PC-9 (cell line): ENCODE measurements at regions of chr1 and their contacts with region 1.

Region 1: DNA sequence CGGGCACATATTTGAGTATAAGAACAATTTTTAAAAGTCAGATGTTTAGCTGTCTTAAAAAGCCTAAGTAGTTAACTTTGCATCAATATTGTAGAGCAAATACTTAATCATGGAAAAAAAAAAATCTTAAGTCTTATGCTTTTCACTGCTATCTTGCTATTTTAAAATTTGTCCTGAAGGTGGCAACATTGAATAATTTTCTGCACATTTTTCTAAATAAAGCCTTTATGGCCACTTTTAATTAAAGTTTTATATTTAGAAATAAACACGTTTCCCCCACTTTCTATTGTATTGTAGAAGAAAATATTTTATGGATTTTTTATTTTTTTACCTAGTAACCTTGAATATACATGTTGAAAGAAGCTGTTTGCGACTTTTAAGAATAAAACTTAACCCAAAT is 198.8 kb downstream of the AMY1C start:
- DNase-seq: no peak
- H3K4me3 ChIP-seq: no peak overlapping the region
- H3K27ac ChIP-seq: no peak overlapping the region
- H3K4me1 ChIP-seq: no peaks in the 10 kb centered on the region
- H3K27me3 ChIP-seq: no peaks in the 10 kb centered on the region
- CTCF ChIP-seq: peak; percentile 71

Region 2: GRCh38 chr1:104132382-104132973 is 184.0 kb after region 1 on chr1:
- CTCF ChIA-PET with region 1: no interaction called
- POLR2A ChIA-PET with region 1: no interaction called
- intact Hi-C with region 1: loop called (anchors 1 kb)
- DNase-seq: peak in 1 of 2 experiments; percentile 45
- H3K4me3 ChIP-seq: no peak overlapping the region
- H3K27ac ChIP-seq: no peak overlapping the region
- H3K4me1 ChIP-seq: no peaks in the 10 kb centered on the region
- H3K27me3 ChIP-seq: no peaks in the 10 kb centered on the region
- CTCF ChIP-seq: peak; percentile 82

Region 3: GRCh38 chr1:104593413-104594187 is 645.1 kb after region 1 on chr1:
- CTCF ChIA-PET with region 1: no interaction called
- POLR2A ChIA-PET with region 1: no interaction called
- intact Hi-C with region 1: no loop called
- DNase-seq: no peak
- H3K4me3 ChIP-seq: no peak overlapping the region
- H3K27ac ChIP-seq: no peak overlapping the region
- H3K4me1 ChIP-seq: no peaks in the 10 kb centered on the region
- H3K27me3 ChIP-seq: no peaks in the 10 kb centered on the region
- CTCF ChIP-seq: no peak

Region 4: GRCh38 chr1:104765085-104765484 is 816.6 kb after region 1 on chr1:
- CTCF ChIA-PET with region 1: no interaction called
- POLR2A ChIA-PET with region 1: no interaction called
- intact Hi-C with region 1: no loop called
- DNase-seq: no peak
- H3K4me3 ChIP-seq: no peak overlapping the region
- H3K27ac ChIP-seq: no peak overlapping the region
- H3K4me1 ChIP-seq: no peaks in the 10 kb centered on the region
- H3K27me3 ChIP-seq: no peaks in the 10 kb centered on the region
- CTCF ChIP-seq: no peak

Region 5: GRCh38 chr1:105793536-105794146 is 1845.1 kb after region 1 on chr1:
- CTCF ChIA-PET with region 1: no interaction called
- POLR2A ChIA-PET with region 1: no interaction called
- intact Hi-C with region 1: loop called (anchors 10 kb)
- DNase-seq: peak in 1 of 2 experiments; percentile 25
- H3K4me3 ChIP-seq: no peak overlapping the region
- H3K27ac ChIP-seq: no peak overlapping the region
- H3K4me1 ChIP-seq: no peaks in the 10 kb centered on the region
- H3K27me3 ChIP-seq: no peaks in the 10 kb centered on the region
- CTCF ChIP-seq: peak; percentile 92